Activated CD4-positive, alpha-beta T cell treated with anti-CD3 and anti-CD28 coated beads for 36 hours (primary cell): ENCODE measurements at regions of chr18 and their contacts with region 1.

Region 1: GRCh38 chr18:79393635-79394533 is 1.8 kb upstream of the NFATC1 start:
- DNase-seq: peak; percentile 69
- ATAC-seq: peak; percentile 8
- H3K4me3 Mint-ChIP-seq: peak overlapping the region; percentile 73
- H3K27ac Mint-ChIP-seq: peak overlapping the region; percentile 78
- H3K4me1 Mint-ChIP-seq: peaks cover 16% of the 10 kb centered on the region
- H3K27me3 Mint-ChIP-seq: peaks cover 10% of the 10 kb centered on the region

Region 2: GRCh38 chr18:79302120-79302519 is 91.8 kb before region 1 on chr18:
- CTCF ChIA-PET with region 1: no interaction called
- POLR2A ChIA-PET with region 1: no interaction called
- intact Hi-C with region 1: no loop called
- DNase-seq: no peak
- ATAC-seq: no peak
- H3K4me3 Mint-ChIP-seq: no peak overlapping the region
- H3K27ac Mint-ChIP-seq: no peak overlapping the region
- H3K4me1 Mint-ChIP-seq: no peaks in the 10 kb centered on the region
- H3K27me3 Mint-ChIP-seq: no peaks in the 10 kb centered on the region

Region 3: DNA sequence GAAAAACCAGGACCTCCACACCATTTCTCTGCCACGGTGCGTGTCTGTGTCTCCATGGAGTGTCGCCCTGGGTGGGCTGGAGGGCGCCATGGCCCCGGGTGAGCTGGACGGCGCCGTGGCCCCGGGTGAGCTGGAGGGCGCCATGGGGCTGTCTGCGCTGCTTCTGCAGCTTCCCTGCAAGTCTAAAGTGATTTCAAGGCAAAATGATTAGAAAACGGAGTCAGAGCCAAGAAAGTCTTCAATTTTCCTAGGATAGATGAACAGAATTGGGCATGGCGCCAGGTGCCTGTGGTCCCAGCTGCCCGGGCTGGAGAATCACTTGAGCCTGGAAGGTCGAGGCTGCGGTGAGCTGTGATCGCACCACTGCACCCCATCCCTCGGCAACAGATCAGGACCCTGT is 25.9 kb before region 1 on chr18:
- CTCF ChIA-PET with region 1: no interaction called
- POLR2A ChIA-PET with region 1: no interaction called
- intact Hi-C with region 1: no loop called
- DNase-seq: no peak
- ATAC-seq: no peak
- H3K4me3 Mint-ChIP-seq: no peak overlapping the region
- H3K27ac Mint-ChIP-seq: no peak overlapping the region
- H3K4me1 Mint-ChIP-seq: peaks cover 26% of the 10 kb centered on the region
- H3K27me3 Mint-ChIP-seq: no peaks in the 10 kb centered on the region

Region 4: DNA sequence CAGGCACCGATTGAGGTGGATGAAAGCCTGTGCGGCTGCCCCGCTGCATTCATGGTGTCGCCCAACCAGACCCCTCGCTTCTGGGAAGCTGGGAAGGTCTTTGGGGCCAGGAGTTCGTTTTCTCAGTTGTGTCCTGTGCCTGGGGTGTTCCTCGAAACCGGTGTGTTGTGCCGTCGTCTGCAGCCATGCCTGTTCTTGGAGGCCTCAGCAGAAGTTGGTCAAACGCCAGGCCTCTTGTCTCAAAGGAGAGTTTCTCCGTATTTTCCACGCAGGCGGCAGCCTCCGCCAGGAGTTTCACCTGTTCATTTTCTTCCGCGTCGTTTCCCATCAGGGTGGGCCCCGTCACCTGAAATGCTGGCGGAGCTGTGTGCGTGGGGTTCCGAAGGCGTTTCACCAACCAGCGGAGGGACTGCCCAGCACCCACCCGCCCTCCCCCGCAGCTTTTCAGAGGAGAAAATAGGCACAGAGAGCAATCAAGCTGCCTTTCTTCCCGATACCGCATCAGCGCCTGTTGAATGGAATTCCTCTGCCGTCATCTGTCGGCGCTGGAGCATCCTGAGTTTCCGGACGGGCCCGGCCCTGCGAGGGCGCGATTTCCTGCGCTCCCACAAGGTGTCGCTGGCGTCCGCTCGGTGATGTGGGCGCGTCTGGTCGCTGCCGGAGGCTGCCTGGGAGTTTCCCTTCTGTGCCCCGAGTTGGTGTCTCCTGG is 15.2 kb before region 1 on chr18:
- CTCF ChIA-PET with region 1: interaction called, 30 read pairs
- POLR2A ChIA-PET with region 1: no interaction called
- intact Hi-C with region 1: loop called in 1 of 2 experiments (anchors 1 kb)
- DNase-seq: peak; percentile 92
- ATAC-seq: peak; percentile 93
- H3K4me3 Mint-ChIP-seq: no peak overlapping the region
- H3K27ac Mint-ChIP-seq: peak overlapping the region; percentile 58
- H3K4me1 Mint-ChIP-seq: peaks cover 10% of the 10 kb centered on the region
- H3K27me3 Mint-ChIP-seq: no peaks in the 10 kb centered on the region

Region 5: DNA sequence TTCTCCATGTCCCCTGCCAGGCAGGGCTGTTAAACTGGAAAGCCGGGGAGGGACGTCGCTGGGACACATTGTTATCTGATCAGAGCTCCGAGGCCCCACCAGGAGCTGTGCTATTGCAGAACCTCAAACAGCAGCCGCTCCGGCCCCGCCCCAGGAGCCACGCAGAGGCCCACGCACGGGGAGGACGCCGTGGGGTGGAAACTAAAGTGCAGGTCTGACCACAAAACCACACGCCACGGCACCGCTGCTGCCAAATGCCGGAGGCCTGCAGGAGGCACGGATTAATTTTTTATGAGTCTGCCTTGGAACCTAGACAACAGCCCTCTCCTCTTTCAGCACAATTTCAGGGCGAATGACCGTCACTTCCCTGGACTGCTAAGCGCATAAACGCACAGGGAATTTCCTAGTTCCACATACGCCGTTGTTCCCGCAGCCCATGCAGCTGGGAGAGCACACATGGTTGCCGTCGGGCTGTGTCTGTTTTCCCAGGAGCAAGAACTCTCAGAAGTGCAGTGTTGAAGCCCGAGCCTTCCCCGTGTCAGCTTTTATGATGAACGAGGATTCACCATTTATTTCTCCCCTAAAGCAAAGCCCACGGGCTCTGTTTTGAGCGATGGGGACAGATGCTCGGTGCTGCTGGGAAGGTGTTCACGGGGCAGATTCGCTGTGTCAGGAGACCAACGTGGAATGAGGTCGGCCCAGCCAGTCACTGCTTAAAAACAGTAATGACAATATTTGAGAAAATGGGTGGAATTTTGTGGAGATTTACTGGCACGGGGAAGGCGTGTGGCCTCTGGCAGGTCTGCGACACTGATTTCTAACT is 45.5 kb after region 1 on chr18:
- CTCF ChIA-PET with region 1: no interaction called
- POLR2A ChIA-PET with region 1: interaction called, 10 read pairs
- intact Hi-C with region 1: loop called in 1 of 2 experiments (anchors 2 kb)
- DNase-seq: peak; percentile 61
- ATAC-seq: no peak
- H3K4me3 Mint-ChIP-seq: no peak overlapping the region
- H3K27ac Mint-ChIP-seq: peak overlapping the region; percentile 65
- H3K4me1 Mint-ChIP-seq: peaks cover 61% of the 10 kb centered on the region
- H3K27me3 Mint-ChIP-seq: no peaks in the 10 kb centered on the region

Region 6: GRCh38 chr18:79687806-79688205 is 293.9 kb after region 1 on chr18:
- CTCF ChIA-PET with region 1: no interaction called
- POLR2A ChIA-PET with region 1: no interaction called
- intact Hi-C with region 1: no loop called
- DNase-seq: peak; percentile 35
- ATAC-seq: no peak
- H3K4me3 Mint-ChIP-seq: no peak overlapping the region
- H3K27ac Mint-ChIP-seq: peak overlapping the region; percentile 13
- H3K4me1 Mint-ChIP-seq: peaks cover 57% of the 10 kb centered on the region
- H3K27me3 Mint-ChIP-seq: no peaks in the 10 kb centered on the region

Region 7: DNA sequence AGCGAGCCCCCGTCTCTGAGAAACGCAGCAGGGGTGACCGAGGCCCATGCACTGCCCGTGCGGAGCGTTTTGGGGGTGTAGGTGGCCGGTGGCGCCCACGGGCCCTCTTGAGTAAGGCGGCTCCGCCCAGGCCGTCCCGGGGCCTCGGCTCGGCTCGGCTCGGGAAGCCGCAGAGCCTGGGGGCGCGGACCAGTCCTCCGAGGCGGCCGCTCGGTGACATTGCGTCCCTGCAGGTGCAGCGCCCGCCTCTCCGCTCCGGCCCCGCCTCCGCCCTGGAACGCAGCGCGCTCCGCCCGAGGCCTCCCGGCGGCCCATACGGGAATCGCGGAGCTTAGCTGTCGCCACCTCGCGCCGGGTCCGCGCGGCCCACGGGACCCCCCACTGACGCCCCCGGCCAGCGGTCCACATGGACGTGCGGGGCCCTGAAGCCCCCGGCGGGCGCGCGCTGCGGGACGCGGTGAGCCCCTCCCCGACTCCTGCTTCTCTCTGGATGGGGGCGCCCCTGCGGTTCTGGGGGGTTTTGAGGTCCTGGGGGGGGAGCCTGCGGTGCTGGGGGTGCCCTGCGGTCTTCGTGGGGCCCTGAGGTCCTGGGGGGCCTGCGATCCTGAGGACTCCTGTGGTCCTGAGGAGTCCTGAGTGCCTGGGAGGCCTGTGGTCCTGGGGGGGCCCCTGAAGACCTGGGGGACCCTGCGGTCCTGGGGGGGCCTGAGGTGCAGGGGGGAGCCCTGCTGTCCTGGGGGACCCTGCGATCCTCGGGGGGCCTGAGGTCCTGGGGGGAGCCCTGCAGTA is 570.6 kb after region 1 on chr18 and contains the start of gene HSBP1L1:
- CTCF ChIA-PET with region 1: no interaction called
- POLR2A ChIA-PET with region 1: no interaction called
- intact Hi-C with region 1: loop called in 1 of 2 experiments (anchors 10 kb)
- DNase-seq: peak; percentile 83
- ATAC-seq: peak; percentile 79
- H3K4me3 Mint-ChIP-seq: peak within 1 kb of the TSS; percentile 71
- H3K27ac Mint-ChIP-seq: peak within 1 kb of the TSS; percentile 80
- H3K4me1 Mint-ChIP-seq: peaks cover 41% of the 10 kb centered on the region
- H3K27me3 Mint-ChIP-seq: peaks cover 2% of the 10 kb centered on the region
- total RNA-seq, gene HSBP1L1: 14.4 to 16.9 TPM

Region 8: DNA sequence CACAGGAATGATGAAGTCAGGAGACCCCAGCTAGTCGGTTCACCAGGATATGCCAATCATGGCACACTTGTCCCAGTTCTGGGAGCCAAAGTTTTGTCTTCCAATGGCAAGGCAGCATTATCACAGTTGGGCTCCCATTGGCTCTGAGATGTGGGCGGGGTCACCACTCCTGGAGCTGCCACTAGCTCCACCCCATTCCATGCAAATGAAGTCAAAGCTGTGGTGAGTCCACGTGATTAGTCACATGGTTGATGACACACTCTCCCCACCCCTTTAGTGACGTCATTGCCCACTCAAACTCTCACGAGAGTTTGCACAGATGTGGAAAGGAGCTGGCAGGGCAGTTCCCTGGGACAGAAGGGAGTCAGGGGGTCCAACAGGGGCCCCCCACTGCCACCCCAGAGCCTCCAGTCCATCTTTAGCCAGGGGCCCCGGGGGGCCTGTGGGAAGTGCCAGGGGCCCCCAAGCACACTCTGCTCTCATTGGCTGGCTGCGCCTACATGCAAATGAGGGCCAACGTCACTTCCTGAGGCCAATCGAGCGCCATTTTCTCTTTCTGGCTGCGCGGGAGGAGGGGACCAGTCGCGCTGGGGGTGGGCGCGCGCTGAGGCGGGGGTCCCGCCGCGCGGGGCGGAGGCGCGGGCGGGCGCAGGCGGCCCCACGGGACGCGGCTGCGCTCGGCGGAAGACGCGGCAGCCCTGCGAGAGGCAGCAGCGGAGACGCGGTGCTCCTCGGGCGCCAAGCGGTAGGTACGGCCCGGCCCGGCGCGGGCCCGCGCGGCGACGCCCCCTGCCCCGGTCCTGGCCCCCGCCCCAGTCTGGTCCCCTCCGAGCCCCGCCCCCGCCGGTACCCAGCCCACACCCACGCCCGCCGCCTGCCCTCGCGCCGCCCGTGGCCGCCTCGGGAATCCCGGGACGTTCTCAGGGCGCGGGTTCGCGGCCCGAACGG is 715.1 kb after region 1 on chr18 and contains the start of gene ADNP2:
- CTCF ChIA-PET with region 1: no interaction called
- POLR2A ChIA-PET with region 1: no interaction called
- intact Hi-C with region 1: loop called in 1 of 2 experiments (anchors 2 kb)
- DNase-seq: peak; percentile 92
- ATAC-seq: peak; percentile 83
- H3K4me3 Mint-ChIP-seq: peak within 1 kb of the TSS; percentile 77
- H3K27ac Mint-ChIP-seq: peak within 1 kb of the TSS; percentile 86
- H3K4me1 Mint-ChIP-seq: peaks cover 48% of the 10 kb centered on the region
- H3K27me3 Mint-ChIP-seq: no peaks in the 10 kb centered on the region
- total RNA-seq, gene ADNP2: 22.8 to 25.7 TPM